Ovary (tissue), 10 donors: ENCODE measurements at regions of chr13 and their contacts with region 1.

Region 1: DNA sequence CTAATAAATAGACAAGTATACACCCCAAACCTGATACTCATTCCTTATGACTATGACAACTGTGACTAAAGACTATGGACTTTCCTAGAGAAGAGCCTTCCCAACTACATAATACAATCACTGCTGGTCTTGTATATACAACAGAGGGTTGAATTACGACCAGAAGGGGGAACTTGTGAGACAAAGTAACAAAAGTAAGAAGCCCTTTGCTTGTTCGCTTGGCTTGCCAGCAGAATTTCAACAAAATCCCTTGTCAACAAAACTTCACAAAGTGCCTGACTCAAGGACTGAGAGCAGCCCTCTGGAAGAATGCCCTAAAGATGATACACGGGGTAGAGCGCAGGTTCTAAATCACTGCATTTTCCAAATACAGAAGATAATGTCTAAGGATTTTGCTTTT is 99.4 kb downstream of the WASF3 start:
- DNase-seq: peak in 1 of 5 donors; percentile 40
- H3K4me3 ChIP-seq: no peak overlapping the region
- H3K27ac ChIP-seq: no peak overlapping the region
- H3K4me1 ChIP-seq: peaks cover 16% of the 10 kb centered on the region
- H3K27me3 ChIP-seq: no peaks in the 10 kb centered on the region
- CTCF ChIP-seq: peak in 1 of 3 donors; percentile 16
- EP300 ChIP-seq: no peak
- POLR2A ChIP-seq: no peak

Region 2: DNA sequence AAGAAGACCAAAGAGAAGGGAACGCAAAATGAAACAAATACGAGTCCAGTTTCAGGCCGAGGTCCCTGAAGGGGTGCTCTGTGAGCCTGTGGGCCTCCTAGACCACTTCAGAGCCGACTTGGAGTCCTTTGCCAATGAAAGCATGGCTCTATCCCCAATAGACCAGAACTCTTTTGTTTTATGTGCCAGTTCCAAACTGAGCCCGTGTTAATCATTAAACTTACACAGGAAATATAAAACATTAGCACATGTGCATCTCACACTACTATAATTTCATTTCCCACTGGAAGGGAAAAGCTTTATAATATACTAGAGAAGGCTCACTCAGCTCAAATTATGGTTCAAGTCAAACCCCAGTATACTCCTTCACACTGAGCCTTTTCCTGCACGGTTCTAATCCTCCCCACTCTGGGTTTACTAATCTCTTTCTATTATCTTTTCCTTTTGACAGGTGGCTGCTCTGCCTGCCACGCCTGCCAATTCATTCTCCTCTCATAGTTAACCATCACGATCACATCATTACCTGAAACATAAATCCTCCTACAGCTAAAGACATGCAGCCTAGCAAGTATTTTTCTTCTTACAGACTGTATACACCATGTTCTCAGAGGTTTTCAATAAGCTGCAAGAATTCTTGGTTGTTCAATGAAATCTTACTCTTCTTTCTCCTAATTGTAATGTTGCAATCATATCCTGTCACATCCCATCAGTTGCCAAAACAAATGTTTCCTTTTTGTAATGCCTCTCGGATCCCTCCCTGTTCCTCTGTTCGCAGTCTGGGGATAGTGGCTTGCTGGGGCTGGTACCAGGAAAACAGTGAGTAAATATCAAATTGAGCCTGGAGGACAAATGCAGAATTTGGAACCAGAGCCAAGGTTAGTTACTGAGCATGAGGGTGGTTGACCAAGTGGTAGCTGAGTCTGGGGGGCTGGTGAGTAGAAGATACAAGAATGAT is 118.3 kb before region 1 on chr13:
- intact Hi-C with region 1: loop called in 1 of 4 experiments (anchors 10 kb)
- DNase-seq: no peak
- H3K4me3 ChIP-seq: no peak overlapping the region
- H3K27ac ChIP-seq: no peak overlapping the region
- H3K4me1 ChIP-seq: no peaks in the 10 kb centered on the region
- H3K27me3 ChIP-seq: no peaks in the 10 kb centered on the region
- CTCF ChIP-seq: no peak
- EP300 ChIP-seq: no peak
- POLR2A ChIP-seq: no peak